ENCODE measurements at regions of chr11 and their contacts with region 1.

Region 1: GRCh38 chr11:119533921-119534736 is 111.2 kb upstream of the THY1 start:
- DNase-seq: peak; percentile 53 to 64
- ATAC-seq: peak; percentile 95 to 98
- H3K4me3 ChIP-seq: no peak overlapping the region
- H3K27ac ChIP-seq: no peak overlapping the region
- H3K4me1 ChIP-seq: no peaks in the 10 kb centered on the region
- CTCF ChIP-seq: peak; percentile 88
- EP300 ChIP-seq: no peak
- POLR2A ChIP-seq: no peak
- RAD21 ChIP-seq: peak; percentile 57 to 65

Region 2: DNA sequence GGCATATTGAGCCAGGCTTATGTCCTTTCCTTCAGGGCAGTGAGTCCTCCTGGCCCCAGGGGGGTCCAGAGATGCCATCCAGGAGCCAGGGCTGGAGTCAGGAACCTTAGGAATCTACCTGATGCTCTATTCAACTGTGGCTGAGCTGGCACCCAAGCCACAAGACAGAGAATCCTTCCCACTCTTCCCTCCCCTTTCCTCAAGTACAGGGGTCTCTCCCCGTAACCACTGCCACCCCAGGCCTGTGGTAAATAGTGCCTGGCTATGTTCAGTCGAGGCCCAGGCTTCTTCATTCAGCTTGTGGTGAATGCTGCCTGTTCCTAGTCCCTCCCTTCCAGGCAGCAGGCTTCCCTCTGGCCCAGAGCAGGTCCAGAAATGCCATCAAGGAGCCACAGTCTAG is 65.6 kb before region 1 on chr11:
- CTCF ChIA-PET with region 1: no interaction called
- POLR2A ChIA-PET with region 1: no interaction called
- DNase-seq: no peak
- ATAC-seq: no peak
- H3K4me3 ChIP-seq: no peak overlapping the region
- H3K27ac ChIP-seq: no peak overlapping the region
- H3K4me1 ChIP-seq: no peaks in the 10 kb centered on the region
- CTCF ChIP-seq: no peak
- EP300 ChIP-seq: no peak
- POLR2A ChIP-seq: no peak
- RAD21 ChIP-seq: no peak

Region 3: GRCh38 chr11:119481021-119481666 is 53.0 kb before region 1 on chr11:
- CTCF ChIA-PET with region 1: interaction called, 14 read pairs
- POLR2A ChIA-PET with region 1: no interaction called
- DNase-seq: peak; percentile 84 to 86
- ATAC-seq: peak; percentile 88 to 90
- H3K4me3 ChIP-seq: no peak overlapping the region
- H3K27ac ChIP-seq: peak overlapping the region in 1 of 2 experiments; percentile 44; a peak in 2 of 6 replicates
- H3K4me1 ChIP-seq: peaks cover 8% of the 10 kb centered on the region
- CTCF ChIP-seq: peak; percentile 85
- EP300 ChIP-seq: no peak
- POLR2A ChIP-seq: no peak
- RAD21 ChIP-seq: peak; percentile 87 to 90

Region 4: DNA sequence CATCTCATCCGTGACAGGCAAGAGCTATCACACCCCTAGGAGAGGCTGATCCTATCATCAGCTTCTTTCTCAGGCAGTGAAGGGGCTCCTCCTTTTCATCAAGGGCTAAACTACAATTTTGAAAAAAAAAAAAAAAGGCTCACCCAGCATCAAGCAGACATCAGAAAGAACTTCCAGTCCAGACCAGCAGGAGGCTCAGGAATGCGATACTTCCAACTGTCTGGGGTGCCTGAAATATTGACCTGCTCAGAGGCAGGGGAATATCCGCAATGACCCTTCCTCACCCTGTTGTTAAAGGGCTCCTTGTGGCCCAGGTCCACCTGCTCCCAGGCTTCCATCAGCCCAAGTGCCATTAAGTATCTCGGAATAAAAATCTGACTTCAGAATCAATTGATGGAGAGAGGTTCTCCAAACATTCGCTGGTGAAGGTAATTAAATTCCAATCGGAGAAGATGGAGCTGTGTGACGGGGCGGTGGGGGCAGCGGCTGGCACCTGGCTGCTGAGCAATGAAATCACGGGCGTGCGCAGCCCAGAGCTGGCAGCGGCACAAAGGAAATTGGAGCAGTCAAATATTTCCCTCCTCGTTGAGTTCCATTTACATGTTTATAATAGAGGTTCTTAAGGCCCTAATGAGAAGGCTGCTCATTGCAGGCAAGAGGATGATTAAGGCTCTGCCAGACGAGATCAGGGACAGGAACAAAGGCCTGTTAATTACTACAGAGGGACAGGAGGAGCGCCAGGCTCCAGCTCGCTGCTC is 42.2 kb before region 1 on chr11:
- CTCF ChIA-PET with region 1: interaction called, 14 read pairs
- POLR2A ChIA-PET with region 1: no interaction called
- DNase-seq: no peak
- ATAC-seq: peak in 1 of 2 experiments; percentile 79; a peak in 3 of 6 replicates
- H3K4me3 ChIP-seq: no peak overlapping the region
- H3K27ac ChIP-seq: no peak overlapping the region
- H3K4me1 ChIP-seq: no peaks in the 10 kb centered on the region
- CTCF ChIP-seq: no peak
- EP300 ChIP-seq: no peak
- POLR2A ChIP-seq: no peak
- RAD21 ChIP-seq: 0 out of 5 replicates have a peak, but pooled peaks of 1 of the 2 experiments have one; percentile 9

Measured in A549 (cell line).